Endothelial cell of umbilical vein (primary cell): ENCODE measurements at regions of chr9 and their contacts with region 1.

Region 1: GRCh38 chr9:89549031-89549644 is 51.2 kb upstream of the SEMA4D start:
- DNase-seq: peak; percentile 74
- H3K4me3 ChIP-seq: no peak overlapping the region
- H3K27ac ChIP-seq: no peak overlapping the region
- H3K4me1 ChIP-seq: no peaks in the 10 kb centered on the region
- H3K27me3 ChIP-seq: peaks cover 0 to 4% of the 10 kb centered on the region in 2 experiments
- CTCF ChIP-seq: peak; percentile 90 to 94
- POLR2A ChIP-seq: no peak

Region 2: GRCh38 chr9:87950765-87951488 is 1598.2 kb before region 1 on chr9:
- CTCF ChIA-PET with region 1: no interaction called
- POLR2A ChIA-PET with region 1: no interaction called
- dilution Hi-C with region 1: no loop called
- intact Hi-C with region 1: loop called (anchors 5 kb)
- DNase-seq: peak; percentile 32
- H3K4me3 ChIP-seq: no peak overlapping the region
- H3K27ac ChIP-seq: no peak overlapping the region
- H3K4me1 ChIP-seq: no peaks in the 10 kb centered on the region
- H3K27me3 ChIP-seq: peaks cover 0 to 2% of the 10 kb centered on the region in 2 experiments
- CTCF ChIP-seq: peak; percentile 31 to 50
- POLR2A ChIP-seq: no peak

Region 3: DNA sequence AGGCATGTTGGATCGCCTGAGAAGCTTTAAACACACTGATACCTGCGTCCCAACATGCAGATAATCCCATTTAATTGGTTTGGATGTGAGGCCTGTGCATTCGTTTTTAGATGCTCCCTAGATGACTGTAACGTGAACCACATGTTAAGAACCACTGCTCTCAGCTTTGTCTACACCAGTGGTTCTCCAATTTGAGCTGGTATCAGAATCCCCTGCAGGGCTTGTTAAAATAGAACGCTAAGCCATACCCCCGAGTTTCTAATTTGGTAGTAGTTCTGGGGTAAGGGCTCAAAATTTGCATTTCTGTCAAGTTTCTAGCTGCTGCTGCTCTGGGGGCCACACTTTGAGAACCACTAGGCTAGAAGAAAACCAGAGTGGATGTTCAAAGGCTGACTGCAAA is 483.2 kb before region 1 on chr9:
- CTCF ChIA-PET with region 1: no interaction called
- POLR2A ChIA-PET with region 1: no interaction called
- dilution Hi-C with region 1: no loop called
- intact Hi-C with region 1: no loop called
- DNase-seq: no peak
- H3K4me3 ChIP-seq: no peak overlapping the region
- H3K27ac ChIP-seq: no peak overlapping the region
- H3K4me1 ChIP-seq: no peaks in the 10 kb centered on the region
- H3K27me3 ChIP-seq: no peaks in the 10 kb centered on the region
- CTCF ChIP-seq: no peak
- POLR2A ChIP-seq: no peak

Region 4: DNA sequence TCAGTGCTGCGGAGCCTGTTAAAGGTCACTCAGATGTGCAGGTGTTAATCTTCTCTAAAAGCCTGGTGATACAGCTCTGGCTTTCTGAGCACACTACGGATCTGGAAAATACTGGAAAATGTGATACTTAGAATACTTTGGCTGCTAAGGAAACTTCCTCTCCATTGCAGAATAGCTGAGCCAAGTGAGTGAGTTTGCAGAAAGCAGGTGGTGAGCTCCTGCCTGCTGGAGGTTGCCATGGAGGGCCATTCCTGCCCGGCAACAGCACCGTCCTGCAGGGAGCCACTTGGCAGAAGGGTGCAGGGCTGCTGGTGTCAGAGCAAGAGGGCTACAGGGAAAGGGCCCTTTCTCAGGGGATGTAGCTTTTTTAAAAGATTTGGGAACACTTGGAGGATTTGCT is 190.2 kb before region 1 on chr9:
- CTCF ChIA-PET with region 1: interaction called, 62 read pairs
- POLR2A ChIA-PET with region 1: no interaction called
- dilution Hi-C with region 1: no loop called
- intact Hi-C with region 1: loop called (anchors 1 kb)
- DNase-seq: peak; percentile 28
- H3K4me3 ChIP-seq: no peak overlapping the region
- H3K27ac ChIP-seq: no peak overlapping the region
- H3K4me1 ChIP-seq: peaks cover 7% of the 10 kb centered on the region
- H3K27me3 ChIP-seq: no peaks in the 10 kb centered on the region
- CTCF ChIP-seq: no peak
- POLR2A ChIP-seq: no peak

Region 5: DNA sequence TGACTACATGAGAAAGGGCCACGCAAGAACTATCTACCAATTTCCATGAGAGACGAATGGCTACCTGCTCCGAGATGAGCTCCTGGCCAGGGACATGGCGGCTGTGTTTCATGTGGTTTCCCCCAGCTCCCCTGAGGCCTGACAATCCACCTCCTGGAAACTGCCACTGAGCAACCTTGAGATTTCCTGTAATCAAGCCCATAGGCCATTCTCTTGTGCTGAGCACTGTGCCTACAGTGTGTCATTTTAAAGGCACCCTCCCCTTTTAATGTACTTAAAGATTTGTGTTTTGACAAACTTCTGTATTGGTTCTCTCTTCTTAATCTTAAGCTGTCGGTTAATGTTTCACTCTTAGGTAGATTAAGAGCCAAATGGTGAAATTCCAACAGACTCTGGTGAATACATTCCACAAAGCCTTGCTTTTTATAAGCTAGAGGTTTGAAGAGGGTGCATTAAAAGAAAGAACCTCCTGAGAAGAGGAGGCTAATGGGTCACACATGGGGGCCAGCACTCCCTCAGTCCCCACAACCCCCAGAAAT is 158.5 kb before region 1 on chr9:
- CTCF ChIA-PET with region 1: interaction called, 13 read pairs
- POLR2A ChIA-PET with region 1: no interaction called
- dilution Hi-C with region 1: no loop called
- intact Hi-C with region 1: no loop called
- DNase-seq: no peak
- H3K4me3 ChIP-seq: no peak overlapping the region
- H3K27ac ChIP-seq: no peak overlapping the region
- H3K4me1 ChIP-seq: no peaks in the 10 kb centered on the region
- H3K27me3 ChIP-seq: no peaks in the 10 kb centered on the region
- CTCF ChIP-seq: no peak
- POLR2A ChIP-seq: no peak

Region 6: GRCh38 chr9:89422151-89422975 is 126.8 kb before region 1 on chr9:
- CTCF ChIA-PET with region 1: interaction called, 52 read pairs
- POLR2A ChIA-PET with region 1: no interaction called
- dilution Hi-C with region 1: no loop called
- intact Hi-C with region 1: loop called (anchors 1 kb)
- DNase-seq: no peak
- H3K4me3 ChIP-seq: no peak overlapping the region
- H3K27ac ChIP-seq: no peak overlapping the region
- H3K4me1 ChIP-seq: peaks cover 14% of the 10 kb centered on the region
- H3K27me3 ChIP-seq: no peaks in the 10 kb centered on the region
- CTCF ChIP-seq: no peak
- POLR2A ChIP-seq: no peak

Region 7: DNA sequence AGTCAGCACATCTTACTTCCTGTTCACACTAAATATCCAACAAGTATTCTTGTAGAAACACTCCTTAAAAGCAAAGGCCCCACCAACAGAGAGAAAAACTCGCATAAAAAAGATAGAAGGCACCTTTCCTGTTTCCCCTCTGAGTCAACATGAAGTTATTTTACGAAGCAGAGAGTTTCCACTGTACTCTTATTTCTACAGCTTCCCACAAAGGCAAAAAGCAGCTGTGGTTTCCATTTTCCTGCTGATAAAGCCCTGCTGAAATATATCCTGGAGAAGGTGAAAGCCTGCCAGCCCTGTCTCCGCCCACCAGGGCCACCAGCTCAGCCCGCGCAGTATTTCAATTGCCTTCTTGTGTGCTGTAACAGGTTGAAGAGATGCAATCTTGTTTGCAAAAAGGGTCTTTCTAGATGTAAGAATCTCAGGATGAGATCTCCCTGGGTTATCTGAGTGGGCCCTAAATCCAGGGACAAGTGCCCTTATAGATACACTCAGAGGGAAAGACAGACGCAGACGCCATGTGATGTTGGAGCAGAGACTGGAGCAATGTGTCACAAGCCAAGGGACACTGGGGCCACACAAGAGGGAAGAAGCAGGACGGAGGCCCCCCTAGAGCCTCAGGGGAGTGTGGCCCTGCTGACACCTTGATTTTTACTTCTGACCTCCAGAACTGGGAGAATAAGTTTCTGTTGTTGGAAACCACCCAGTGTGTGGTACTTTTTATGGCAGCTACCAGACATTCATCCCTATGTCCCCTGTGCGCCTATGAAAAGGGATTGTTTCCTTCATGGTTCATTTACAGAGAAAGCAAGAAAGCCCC is 71.1 kb before region 1 on chr9:
- CTCF ChIA-PET with region 1: interaction called, 6 read pairs
- POLR2A ChIA-PET with region 1: no interaction called
- dilution Hi-C with region 1: no loop called
- intact Hi-C with region 1: loop called (anchors 2 kb)
- DNase-seq: peak; percentile 95
- H3K4me3 ChIP-seq: peak overlapping the region in 1 of 3 experiments; percentile 19
- H3K27ac ChIP-seq: peak overlapping the region; percentile 74
- H3K4me1 ChIP-seq: peaks cover 25% of the 10 kb centered on the region
- H3K27me3 ChIP-seq: no peaks in the 10 kb centered on the region
- CTCF ChIP-seq: peak in 1 of 2 donors; percentile 5
- POLR2A ChIP-seq: no peak

Region 8: DNA sequence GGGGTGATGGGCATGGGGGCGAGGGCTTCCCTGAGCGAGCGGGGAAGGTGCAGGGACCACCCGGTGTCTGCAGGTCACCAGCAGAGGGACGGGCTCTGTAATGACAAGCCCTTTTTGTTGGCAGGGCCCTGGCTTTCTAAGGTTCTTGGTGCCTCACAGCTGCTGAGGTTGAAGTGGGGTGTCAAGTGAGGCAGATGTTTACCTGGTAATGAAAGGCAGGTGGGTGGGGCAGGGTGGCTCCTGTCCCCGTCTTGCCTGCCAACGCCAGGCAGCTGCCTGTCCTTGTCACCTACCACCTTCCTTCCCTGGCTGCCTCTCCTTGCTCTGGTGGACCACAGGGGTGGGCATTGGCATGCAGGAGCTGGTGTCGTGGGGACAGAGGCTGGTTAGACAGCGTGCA is 10.3 kb before region 1 on chr9:
- CTCF ChIA-PET with region 1: interaction called, 17 read pairs
- POLR2A ChIA-PET with region 1: no interaction called
- dilution Hi-C with region 1: no loop called
- intact Hi-C with region 1: no loop called
- DNase-seq: no peak
- H3K4me3 ChIP-seq: no peak overlapping the region
- H3K27ac ChIP-seq: no peak overlapping the region
- H3K4me1 ChIP-seq: no peaks in the 10 kb centered on the region
- H3K27me3 ChIP-seq: no peaks in the 10 kb centered on the region
- CTCF ChIP-seq: no peak
- POLR2A ChIP-seq: no peak